Naive thymus-derived CD4-positive, alpha-beta T cell (primary cell): ENCODE measurements at regions of chr14 and their contacts with region 1.

Region 1: DNA sequence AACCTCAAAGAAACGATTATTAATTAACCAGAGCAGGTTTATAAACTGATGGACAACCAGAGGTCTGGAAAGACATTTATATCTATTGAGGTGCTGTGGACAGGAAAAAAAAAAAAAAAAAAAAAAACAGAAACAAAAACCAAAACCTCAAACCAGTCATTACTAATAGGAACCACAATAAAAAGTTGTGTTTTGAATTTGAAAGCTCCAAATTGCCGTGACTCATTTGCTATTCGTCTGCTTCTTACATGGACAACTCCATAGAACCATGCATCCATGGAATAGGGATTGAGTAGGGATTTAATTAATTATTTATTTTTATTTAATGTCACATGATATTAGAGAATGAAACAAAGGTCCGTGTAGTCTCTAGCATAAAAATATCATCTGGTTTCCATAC is 134.1 kb upstream of the SSTR1 start:
- DNase-seq: peak in 1 of 9 donors; percentile 21
- ATAC-seq: no peak
- H3K4me3 ChIP-seq: no peak overlapping the region
- H3K4me3 Mint-ChIP-seq: peak overlapping the region; percentile 6 to 80 (median 62)
- H3K27ac ChIP-seq: no peak overlapping the region
- H3K27ac Mint-ChIP-seq: peak overlapping the region in 8 of 9 donors; percentile 88 to 97 (median 94)
- H3K4me1 ChIP-seq: peaks cover 56 to 70% of the 10 kb centered on the region in 2 donors
- H3K4me1 Mint-ChIP-seq: peaks cover 17 to 95% (median 83%) of the 10 kb centered on the region in 7 donors
- H3K27me3 ChIP-seq: no peaks in the 10 kb centered on the region
- H3K27me3 Mint-ChIP-seq: peaks cover 0 to 4% (median 0%) of the 10 kb centered on the region in 5 donors

Region 2: GRCh38 chr14:37515771-37516170 is 557.9 kb before region 1 on chr14:
- CTCF ChIA-PET with region 1: no interaction called
- POLR2A ChIA-PET with region 1: no interaction called
- intact Hi-C with region 1: no loop called
- DNase-seq: no peak
- ATAC-seq: no peak
- H3K4me3 ChIP-seq: no peak overlapping the region
- H3K4me3 Mint-ChIP-seq: no peak overlapping the region
- H3K27ac ChIP-seq: no peak overlapping the region
- H3K27ac Mint-ChIP-seq: no peak overlapping the region
- H3K4me1 ChIP-seq: no peaks in the 10 kb centered on the region
- H3K4me1 Mint-ChIP-seq: no peaks in the 10 kb centered on the region
- H3K27me3 ChIP-seq: no peaks in the 10 kb centered on the region
- H3K27me3 Mint-ChIP-seq: no peaks in the 10 kb centered on the region

Region 3: GRCh38 chr14:37985826-37986470 is 87.7 kb before region 1 on chr14:
- CTCF ChIA-PET with region 1: interaction called, 3 read pairs
- POLR2A ChIA-PET with region 1: interaction called, 4 read pairs
- intact Hi-C with region 1: loop called in 1 of 2 experiments (anchors 2 kb)
- DNase-seq: peak; percentile 5 to 61 (median 54)
- ATAC-seq: peak; percentile 53
- H3K4me3 ChIP-seq: no peak overlapping the region
- H3K4me3 Mint-ChIP-seq: no peak overlapping the region
- H3K27ac ChIP-seq: no peak overlapping the region
- H3K27ac Mint-ChIP-seq: no peak overlapping the region
- H3K4me1 ChIP-seq: peaks cover 4 to 5% of the 10 kb centered on the region in 2 donors
- H3K4me1 Mint-ChIP-seq: peaks cover 0 to 20% (median 6%) of the 10 kb centered on the region in 7 donors
- H3K27me3 ChIP-seq: no peaks in the 10 kb centered on the region
- H3K27me3 Mint-ChIP-seq: no peaks in the 10 kb centered on the region

Region 4: GRCh38 chr14:38089123-38089522 is 15.5 kb after region 1 on chr14:
- CTCF ChIA-PET with region 1: no interaction called
- POLR2A ChIA-PET with region 1: interaction called, 24 read pairs
- intact Hi-C with region 1: loop called in 1 of 2 experiments (anchors 1 kb)
- DNase-seq: no peak
- ATAC-seq: no peak
- H3K4me3 ChIP-seq: peak overlapping the region; percentile 59
- H3K4me3 Mint-ChIP-seq: peak overlapping the region in 9 of 10 donors; percentile 62 to 91 (median 82)
- H3K27ac ChIP-seq: peak overlapping the region; percentile 64
- H3K27ac Mint-ChIP-seq: peak overlapping the region in 8 of 9 donors; percentile 77 to 97 (median 88)
- H3K4me1 ChIP-seq: peaks cover 4 to 27% of the 10 kb centered on the region in 2 donors
- H3K4me1 Mint-ChIP-seq: peaks cover 0 to 56% (median 22%) of the 10 kb centered on the region in 7 donors
- H3K27me3 ChIP-seq: no peaks in the 10 kb centered on the region
- H3K27me3 Mint-ChIP-seq: no peaks in the 10 kb centered on the region

Region 5: GRCh38 chr14:38107216-38107631 is 33.6 kb after region 1 on chr14:
- CTCF ChIA-PET with region 1: no interaction called
- POLR2A ChIA-PET with region 1: interaction called, 3 read pairs
- intact Hi-C with region 1: loop called in 1 of 2 experiments (anchors 5 kb)
- DNase-seq: no peak
- ATAC-seq: no peak
- H3K4me3 ChIP-seq: no peak overlapping the region
- H3K4me3 Mint-ChIP-seq: no peak overlapping the region
- H3K27ac ChIP-seq: no peak overlapping the region
- H3K27ac Mint-ChIP-seq: peak overlapping the region in 1 of 9 donors; percentile 22
- H3K4me1 ChIP-seq: no peaks in the 10 kb centered on the region
- H3K4me1 Mint-ChIP-seq: peaks cover 0 to 21% (median 12%) of the 10 kb centered on the region in 7 donors
- H3K27me3 ChIP-seq: no peaks in the 10 kb centered on the region
- H3K27me3 Mint-ChIP-seq: no peaks in the 10 kb centered on the region

Region 6: DNA sequence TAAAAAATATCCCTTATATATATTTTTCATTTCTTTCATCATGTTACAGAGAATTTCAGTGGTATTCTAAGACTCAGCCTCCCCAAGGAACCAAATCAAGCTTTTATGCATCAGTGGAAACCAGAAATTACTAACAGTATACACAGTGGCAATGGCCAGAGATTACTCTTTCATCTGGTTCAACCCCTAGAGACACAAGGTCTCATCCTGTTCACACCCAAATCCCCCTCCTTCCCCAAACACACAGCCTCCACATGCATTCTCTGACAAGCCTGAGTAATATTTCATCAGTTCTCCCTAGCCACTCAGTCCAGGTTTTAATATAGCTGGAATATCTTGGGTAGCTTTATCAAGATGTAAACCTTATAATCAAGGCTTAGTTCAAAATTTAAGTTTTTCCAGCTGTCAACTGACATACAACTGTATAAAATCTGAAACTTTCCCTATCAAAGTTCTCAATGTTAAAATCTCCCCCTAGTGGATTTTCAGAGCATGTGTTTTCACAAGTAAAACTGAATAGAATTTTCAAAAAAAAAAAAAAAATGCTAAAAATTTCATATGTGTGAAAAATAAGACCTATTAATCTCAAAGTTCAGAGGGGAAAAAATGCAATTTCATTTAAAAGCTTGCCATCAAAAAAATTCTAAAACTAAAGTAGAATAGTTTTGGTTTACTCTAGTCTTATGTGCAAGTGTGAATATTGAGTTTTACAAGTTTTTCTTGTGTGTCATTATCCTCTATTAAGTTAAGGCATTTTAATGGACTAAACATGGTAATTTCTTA is 123.6 kb after region 1 on chr14:
- CTCF ChIA-PET with region 1: no interaction called
- POLR2A ChIA-PET with region 1: no interaction called
- intact Hi-C with region 1: loop called in 1 of 2 experiments (anchors 1 kb)
- DNase-seq: peak in 5 of 9 donors; percentile 23 to 49 (median 35)
- ATAC-seq: no peak
- H3K4me3 ChIP-seq: no peak overlapping the region
- H3K4me3 Mint-ChIP-seq: no peak overlapping the region
- H3K27ac ChIP-seq: no peak overlapping the region
- H3K27ac Mint-ChIP-seq: peak overlapping the region in 1 of 9 donors; percentile 60
- H3K4me1 ChIP-seq: peaks cover 0 to 4% of the 10 kb centered on the region in 2 donors
- H3K4me1 Mint-ChIP-seq: peaks cover 0 to 8% (median 5%) of the 10 kb centered on the region in 7 donors
- H3K27me3 ChIP-seq: no peaks in the 10 kb centered on the region
- H3K27me3 Mint-ChIP-seq: peaks cover 0 to 2% (median 0%) of the 10 kb centered on the region in 5 donors